ENCODE measurements at regions of chr4 and their contacts with region 1.

Region 1: GRCh38 chr4:17636696-17637622 is 22.5 kb downstream of the MED28 start:
- DNase-seq: peak; percentile 56
- H3K4me3 ChIP-seq: no peak overlapping the region
- H3K27ac ChIP-seq: no peak overlapping the region
- H3K4me1 ChIP-seq: no peaks in the 10 kb centered on the region
- H3K27me3 ChIP-seq: no peaks in the 10 kb centered on the region
- CTCF ChIP-seq: peak; percentile 79 to 93
- POLR2A ChIP-seq: no peak

Region 2: DNA sequence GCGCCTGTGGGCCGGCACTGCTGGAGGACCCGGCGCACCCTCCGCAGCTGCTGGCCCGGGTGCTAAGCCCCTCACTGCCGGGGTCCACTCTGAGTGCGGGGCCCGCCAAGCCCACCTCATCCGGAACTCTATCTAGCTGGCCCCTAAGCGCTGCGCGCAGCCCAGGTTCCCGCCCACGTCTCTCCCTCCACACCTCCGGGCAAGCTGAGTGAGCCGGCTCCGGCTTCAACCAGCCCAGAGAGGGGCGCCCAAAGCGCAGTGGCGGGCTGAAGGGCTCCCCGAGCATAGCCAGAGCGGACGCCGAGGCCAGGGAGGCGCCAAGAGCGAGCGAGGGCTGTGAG is 200.2 kb before region 1 on chr4:
- CTCF ChIA-PET with region 1: no interaction called
- POLR2A ChIA-PET with region 1: no interaction called
- dilution Hi-C with region 1: no loop called
- intact Hi-C with region 1: no loop called
- DNase-seq: no peak
- H3K4me3 ChIP-seq: no peak overlapping the region
- H3K27ac ChIP-seq: no peak overlapping the region
- H3K4me1 ChIP-seq: no peaks in the 10 kb centered on the region
- H3K27me3 ChIP-seq: no peaks in the 10 kb centered on the region
- CTCF ChIP-seq: no peak
- POLR2A ChIP-seq: no peak

Region 3: DNA sequence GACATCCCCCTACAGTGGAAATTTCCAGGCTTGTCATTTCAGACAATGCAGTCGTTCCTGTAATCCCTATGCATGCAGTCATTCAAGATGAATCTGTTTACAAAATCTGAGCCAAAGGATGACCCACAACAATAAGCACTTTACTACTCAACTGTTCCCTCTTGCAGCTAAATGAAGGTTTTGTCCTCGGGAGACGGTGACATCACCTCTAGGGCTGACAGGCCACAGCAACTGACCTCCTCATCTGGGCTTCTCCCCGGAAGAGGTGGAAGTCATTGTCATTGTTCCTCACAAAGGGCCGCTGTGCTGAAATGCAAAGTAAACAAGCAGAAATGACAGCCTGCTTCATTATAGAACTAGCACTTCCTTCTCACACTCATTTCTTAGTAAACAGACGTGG is 92.8 kb before region 1 on chr4:
- CTCF ChIA-PET with region 1: interaction called, 35 read pairs
- POLR2A ChIA-PET with region 1: no interaction called
- dilution Hi-C with region 1: no loop called
- intact Hi-C with region 1: loop called (anchors 1 kb)
- DNase-seq: no peak
- H3K4me3 ChIP-seq: no peak overlapping the region
- H3K27ac ChIP-seq: no peak overlapping the region
- H3K4me1 ChIP-seq: peaks cover 4% of the 10 kb centered on the region
- H3K27me3 ChIP-seq: peaks cover 2 to 3% of the 10 kb centered on the region in 2 experiments
- CTCF ChIP-seq: no peak
- POLR2A ChIP-seq: no peak

Region 4: DNA sequence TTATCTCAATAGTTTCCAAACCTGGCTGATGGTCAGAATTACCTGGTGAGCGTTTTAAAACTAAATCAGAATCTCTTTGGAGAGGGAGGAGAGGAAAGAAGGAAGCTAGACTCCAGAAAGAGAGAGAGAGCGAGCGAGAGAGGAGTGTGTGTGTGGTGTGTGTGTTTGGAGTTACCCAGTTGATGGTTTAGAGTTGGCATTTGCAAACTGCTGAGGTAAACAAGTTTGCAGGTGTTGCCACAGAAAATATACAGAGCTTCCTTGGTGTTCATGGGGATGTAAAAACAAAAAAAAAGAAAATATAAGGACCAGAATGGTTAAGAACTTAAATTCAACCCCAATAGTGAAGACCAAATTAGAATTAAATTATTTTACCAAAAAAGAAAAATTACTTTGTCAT is 86.4 kb before region 1 on chr4:
- CTCF ChIA-PET with region 1: interaction called, 35 read pairs
- POLR2A ChIA-PET with region 1: no interaction called
- dilution Hi-C with region 1: no loop called
- intact Hi-C with region 1: loop called (anchors 1 kb)
- DNase-seq: no peak
- H3K4me3 ChIP-seq: no peak overlapping the region
- H3K27ac ChIP-seq: no peak overlapping the region
- H3K4me1 ChIP-seq: no peaks in the 10 kb centered on the region
- H3K27me3 ChIP-seq: peaks cover 7 to 8% of the 10 kb centered on the region in 2 experiments
- CTCF ChIP-seq: no peak
- POLR2A ChIP-seq: no peak

Region 5: DNA sequence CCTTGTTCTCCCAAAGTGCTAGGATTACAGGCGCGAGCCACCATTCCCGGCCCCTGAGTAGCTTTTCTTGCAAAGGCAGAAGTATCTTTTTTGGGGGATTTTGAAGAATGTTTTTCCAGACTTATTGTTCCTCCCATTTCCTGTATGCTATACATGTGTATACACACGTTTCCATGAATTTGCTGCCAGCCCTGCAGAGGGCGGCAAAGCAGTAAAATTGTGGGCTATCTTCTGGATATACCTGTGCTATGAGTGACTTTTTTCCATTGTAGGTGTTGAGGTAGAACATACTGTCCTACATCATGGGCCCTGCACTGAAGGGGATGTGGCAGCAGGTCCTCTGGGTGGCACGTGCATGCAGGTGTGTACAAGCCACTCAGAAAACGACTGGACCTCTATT is 39.4 kb before region 1 on chr4:
- CTCF ChIA-PET with region 1: interaction called, 3 read pairs
- POLR2A ChIA-PET with region 1: no interaction called
- dilution Hi-C with region 1: no loop called
- intact Hi-C with region 1: loop called (anchors 1 kb)
- DNase-seq: peak; percentile 48
- H3K4me3 ChIP-seq: no peak overlapping the region
- H3K27ac ChIP-seq: no peak overlapping the region
- H3K4me1 ChIP-seq: no peaks in the 10 kb centered on the region
- H3K27me3 ChIP-seq: no peaks in the 10 kb centered on the region
- CTCF ChIP-seq: peak; percentile 32 to 38
- POLR2A ChIP-seq: no peak

Region 6: GRCh38 chr4:17614416-17615299 is 22.3 kb before region 1 on chr4 and contains the start of gene MED28:
- CTCF ChIA-PET with region 1: interaction called, 7 read pairs
- POLR2A ChIA-PET with region 1: no interaction called
- dilution Hi-C with region 1: no loop called
- intact Hi-C with region 1: loop called (anchors 2 kb)
- DNase-seq: peak; percentile 91
- H3K4me3 ChIP-seq: peak within 1 kb of the TSS; percentile 72 to 100 (median 92)
- H3K27ac ChIP-seq: peak within 1 kb of the TSS; percentile 82
- H3K4me1 ChIP-seq: peaks cover 17% of the 10 kb centered on the region
- H3K27me3 ChIP-seq: no peaks in the 10 kb centered on the region
- CTCF ChIP-seq: peak in 1 of 2 donors; percentile 13
- POLR2A ChIP-seq: peak; percentile 90
- total RNA-seq, gene MED28: 41.2 and 49.1 TPM in 2 replicates

Region 7: GRCh38 chr4:17647927-17648326 is 11.0 kb after region 1 on chr4:
- CTCF ChIA-PET with region 1: no interaction called
- POLR2A ChIA-PET with region 1: no interaction called
- dilution Hi-C with region 1: no loop called
- intact Hi-C with region 1: no loop called
- DNase-seq: no peak
- H3K4me3 ChIP-seq: no peak overlapping the region
- H3K27ac ChIP-seq: no peak overlapping the region
- H3K4me1 ChIP-seq: no peaks in the 10 kb centered on the region
- H3K27me3 ChIP-seq: no peaks in the 10 kb centered on the region
- CTCF ChIP-seq: peak in 1 of 2 donors; percentile 11
- POLR2A ChIP-seq: no peak

Measured in endothelial cell of umbilical vein (primary cell).